ENCODE measurements at regions of chr16 and their contacts with region 1.

Region 1: GRCh38 chr16:15765880-15766279 is 90.9 kb downstream of the MYH11 start:
- DNase-seq: peak in 1 of 2 experiments; percentile 50
- H3K4me3 ChIP-seq: no peak overlapping the region
- H3K27ac ChIP-seq: no peak overlapping the region
- H3K4me1 ChIP-seq: 0 out of 7 replicates have a peak, but pooled peaks cover 0 to 1% (median 0%) of the 10 kb centered on the region in 4 experiments
- H3K27me3 ChIP-seq: no peaks in the 10 kb centered on the region
- CTCF ChIP-seq: peak; percentile 37 to 76 (median 72)
- EP300 ChIP-seq: no peak
- POLR2A ChIP-seq: no peak
- RAD21 ChIP-seq: peak; percentile 77 to 85

Region 2: GRCh38 chr16:15701975-15702970 is 63.6 kb before region 1 on chr16:
- CTCF ChIA-PET with region 1: no interaction called
- POLR2A ChIA-PET with region 1: no interaction called
- DNase-seq: no peak
- H3K4me3 ChIP-seq: no peak overlapping the region
- H3K27ac ChIP-seq: no peak overlapping the region
- H3K4me1 ChIP-seq: no peaks in the 10 kb centered on the region; a peak in 1 of 7 replicates
- H3K27me3 ChIP-seq: no peaks in the 10 kb centered on the region
- CTCF ChIP-seq: no peak
- EP300 ChIP-seq: no peak
- POLR2A ChIP-seq: no peak
- RAD21 ChIP-seq: no peak

Region 3: DNA sequence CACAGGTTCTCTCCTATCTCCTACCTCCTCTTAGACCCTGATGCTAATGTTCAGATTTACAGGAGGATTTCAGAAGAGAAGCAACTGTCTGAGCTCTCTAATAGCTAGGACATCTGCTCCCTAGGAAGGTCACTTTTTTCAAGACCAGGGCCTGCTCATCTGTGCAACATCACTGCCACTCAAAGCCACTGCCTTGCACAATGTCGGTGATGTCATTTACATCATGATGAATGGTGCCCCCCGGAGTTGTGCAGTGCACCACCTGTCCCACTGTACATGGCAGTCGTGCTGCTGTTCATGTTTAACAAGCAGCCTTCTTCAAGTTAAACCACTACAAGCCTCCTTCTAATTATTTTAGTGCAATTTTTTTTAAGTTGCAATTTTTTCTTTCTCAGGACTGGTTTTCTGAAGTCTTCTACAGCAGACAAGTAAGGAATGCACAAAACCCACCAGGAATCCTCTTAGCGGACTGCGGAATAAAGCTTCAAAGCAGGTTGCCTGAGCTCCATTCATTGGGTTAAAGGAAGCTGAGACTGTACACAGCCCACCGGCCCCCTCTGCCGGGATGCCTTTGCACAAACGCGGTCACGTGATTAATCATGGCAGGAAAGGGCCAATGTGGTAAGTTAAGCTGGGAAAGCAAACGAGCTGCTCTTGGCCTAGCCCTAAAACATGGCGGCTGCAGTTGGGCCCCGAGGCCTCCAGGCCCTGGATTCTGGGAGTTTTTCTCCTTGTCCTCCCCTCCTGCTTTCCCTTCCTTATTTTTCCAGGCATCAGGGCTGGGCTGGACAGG is 16.9 kb after region 1 on chr16:
- CTCF ChIA-PET with region 1: interaction called, 11 read pairs
- POLR2A ChIA-PET with region 1: interaction called, 3 read pairs
- DNase-seq: no peak
- H3K4me3 ChIP-seq: no peak overlapping the region
- H3K27ac ChIP-seq: no peak overlapping the region
- H3K4me1 ChIP-seq: no peaks in the 10 kb centered on the region
- H3K27me3 ChIP-seq: peaks cover 0 to 6% (median 0%) of the 10 kb centered on the region in 4 experiments; a peak in 2 of 7 replicates
- CTCF ChIP-seq: peak in 1 of 3 experiments; percentile 12; a peak in 1 of 4 replicates
- EP300 ChIP-seq: no peak
- POLR2A ChIP-seq: no peak
- RAD21 ChIP-seq: peak in 1 of 2 experiments; percentile 14; a peak in 1 of 4 replicates

Measured in H1 (cell line).